ENCODE measurements at regions of chr17 and their contacts with region 1.

Region 1: GRCh38 chr17:69567130-69567529 is 152.6 kb downstream of the MAP2K6 start:
- DNase-seq: no peak
- ATAC-seq: no peak
- H3K4me3 ChIP-seq: no peak overlapping the region
- H3K27ac ChIP-seq: no peak overlapping the region
- H3K4me1 ChIP-seq: peaks cover 3 to 5% of the 10 kb centered on the region in 2 donors
- H3K27me3 ChIP-seq: no peaks in the 10 kb centered on the region
- CTCF ChIP-seq: no peak
- POLR2A ChIP-seq: no peak

Region 2: GRCh38 chr17:69711541-69711940 is 144.4 kb after region 1 on chr17:
- in situ Hi-C with region 1: no loop called
- intact Hi-C with region 1: no loop called
- DNase-seq: no peak
- ATAC-seq: no peak
- H3K4me3 ChIP-seq: no peak overlapping the region
- H3K27ac ChIP-seq: no peak overlapping the region
- H3K4me1 ChIP-seq: peaks cover 0 to 15% of the 10 kb centered on the region in 2 donors
- H3K27me3 ChIP-seq: no peaks in the 10 kb centered on the region
- CTCF ChIP-seq: no peak
- POLR2A ChIP-seq: no peak

Region 3: GRCh38 chr17:70622368-70623260 is 1055.5 kb after region 1 on chr17:
- in situ Hi-C with region 1: no loop called
- intact Hi-C with region 1: loop called (anchors 5 kb)
- DNase-seq: peak in 1 of 2 donors; percentile 34
- ATAC-seq: peak in 1 of 2 donors; percentile 51
- H3K4me3 ChIP-seq: no peak overlapping the region
- H3K27ac ChIP-seq: no peak overlapping the region
- H3K4me1 ChIP-seq: peaks cover 0 to 10% of the 10 kb centered on the region in 2 donors
- H3K27me3 ChIP-seq: no peaks in the 10 kb centered on the region
- CTCF ChIP-seq: peak; percentile 22 to 55 (median 37)
- POLR2A ChIP-seq: no peak